ENCODE measurements at regions of chr5 and their contacts with region 1.

Region 1: DNA sequence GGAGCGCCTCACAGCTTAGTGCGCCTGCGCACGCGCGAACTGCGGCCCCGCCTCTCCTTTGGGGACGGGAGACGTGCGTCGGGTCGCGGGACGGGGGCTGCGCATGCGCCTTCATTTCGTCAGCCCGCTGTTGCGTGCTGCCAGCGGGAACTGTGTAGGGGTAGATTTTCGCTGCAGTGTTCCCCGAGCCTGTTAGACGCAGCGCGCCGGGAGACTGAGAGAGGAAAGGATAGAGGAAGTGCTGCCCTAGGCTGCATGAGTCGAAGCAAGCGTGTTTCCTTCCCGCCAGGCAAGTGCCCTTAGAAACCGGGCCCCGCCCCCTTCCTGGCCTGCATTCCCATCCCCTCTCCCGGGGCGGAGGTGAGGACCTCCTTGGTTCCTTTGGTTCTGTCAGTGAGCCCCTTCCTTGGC is 12.3 kb downstream of the ITGA1 start:
- DNase-seq: peak; percentile 91 to 97 (median 94)
- ATAC-seq: peak; percentile 92
- H3K4me3 ChIP-seq: peak overlapping the region; percentile 88
- H3K4me3 Mint-ChIP-seq: peak overlapping the region; percentile 92 to 99 (median 98)
- H3K27ac ChIP-seq: peak overlapping the region; percentile 78
- H3K27ac Mint-ChIP-seq: peak overlapping the region; percentile 89 to 98 (median 95)
- H3K4me1 ChIP-seq: peaks cover 25 to 26% of the 10 kb centered on the region in 2 donors
- H3K4me1 Mint-ChIP-seq: peaks cover 36 to 86% (median 62%) of the 10 kb centered on the region in 7 donors
- H3K27me3 ChIP-seq: no peaks in the 10 kb centered on the region
- H3K27me3 Mint-ChIP-seq: peaks cover 0 to 6% (median 0%) of the 10 kb centered on the region in 5 donors

Region 2: DNA sequence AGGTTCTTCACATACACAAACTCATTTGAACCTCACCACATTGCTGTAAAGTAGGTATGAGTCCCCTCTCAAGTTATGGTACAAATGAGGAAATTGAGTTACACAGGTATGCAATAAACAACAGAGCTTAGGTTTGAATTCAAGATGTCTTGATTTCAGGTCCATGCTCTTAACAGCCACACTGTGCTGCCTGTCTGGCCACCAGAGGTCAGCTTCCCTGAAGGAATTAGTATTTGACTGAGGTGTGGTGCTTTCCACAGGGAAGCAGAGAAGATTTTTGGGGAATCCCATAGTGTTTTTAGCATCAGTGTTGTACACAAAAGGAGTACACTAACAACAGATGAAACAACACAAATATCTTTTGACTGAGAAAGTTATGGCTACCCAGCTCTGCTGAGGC is 106.7 kb before region 1 on chr5:
- CTCF ChIA-PET with region 1: interaction called, 8 read pairs
- POLR2A ChIA-PET with region 1: no interaction called
- intact Hi-C with region 1: loop called (anchors 1 kb)
- DNase-seq: peak in 7 of 9 donors; percentile 10 to 27 (median 25)
- ATAC-seq: peak; percentile 48
- H3K4me3 ChIP-seq: no peak overlapping the region
- H3K4me3 Mint-ChIP-seq: no peak overlapping the region
- H3K27ac ChIP-seq: no peak overlapping the region
- H3K27ac Mint-ChIP-seq: peak overlapping the region in 2 of 9 donors; percentile 1 to 18
- H3K4me1 ChIP-seq: no peaks in the 10 kb centered on the region
- H3K4me1 Mint-ChIP-seq: peaks cover 0 to 17% (median 7%) of the 10 kb centered on the region in 7 donors
- H3K27me3 ChIP-seq: no peaks in the 10 kb centered on the region
- H3K27me3 Mint-ChIP-seq: peaks cover 0 to 26% (median 0%) of the 10 kb centered on the region in 5 donors

Region 3: GRCh38 chr5:52743970-52744369 is 56.0 kb before region 1 on chr5:
- CTCF ChIA-PET with region 1: no interaction called
- POLR2A ChIA-PET with region 1: no interaction called
- intact Hi-C with region 1: loop called (anchors 1 to 2 kb)
- DNase-seq: peak in 8 of 9 donors; percentile 24 to 68 (median 54)
- ATAC-seq: peak; percentile 91
- H3K4me3 ChIP-seq: no peak overlapping the region
- H3K4me3 Mint-ChIP-seq: peak overlapping the region in 9 of 10 donors; percentile 42 to 70 (median 61)
- H3K27ac ChIP-seq: peak overlapping the region; percentile 49
- H3K27ac Mint-ChIP-seq: peak overlapping the region; percentile 80 to 93 (median 90)
- H3K4me1 ChIP-seq: peaks cover 35 to 36% of the 10 kb centered on the region in 2 donors
- H3K4me1 Mint-ChIP-seq: peaks cover 35 to 69% (median 61%) of the 10 kb centered on the region in 7 donors
- H3K27me3 ChIP-seq: no peaks in the 10 kb centered on the region
- H3K27me3 Mint-ChIP-seq: peaks cover 0 to 5% (median 0%) of the 10 kb centered on the region in 5 donors

Region 4: GRCh38 chr5:52787600-52788504 is 12.1 kb before region 1 on chr5 and contains the starts of genes ITGA1 and PELO:
- CTCF ChIA-PET with region 1: interaction called, 8 read pairs
- POLR2A ChIA-PET with region 1: interaction called, 19 read pairs
- intact Hi-C with region 1: loop called (anchors 1 kb)
- DNase-seq: peak; percentile 13 to 55 (median 44)
- ATAC-seq: peak; percentile 84
- H3K4me3 ChIP-seq: peak within 1 kb of the TSS; percentile 71
- H3K4me3 Mint-ChIP-seq: peak within 1 kb of the TSS; percentile 85 to 95 (median 92)
- H3K27ac ChIP-seq: peak within 1 kb of the TSS; percentile 67
- H3K27ac Mint-ChIP-seq: peak within 1 kb of the TSS; percentile 7 to 87 (median 59)
- H3K4me1 ChIP-seq: peaks cover 0 to 15% of the 10 kb centered on the region in 2 donors
- H3K4me1 Mint-ChIP-seq: peaks cover 16 to 40% (median 33%) of the 10 kb centered on the region in 7 donors
- H3K27me3 ChIP-seq: no peaks in the 10 kb centered on the region
- H3K27me3 Mint-ChIP-seq: peaks cover 0 to 41% (median 3%) of the 10 kb centered on the region in 5 donors
- total RNA-seq, gene ITGA1: 0.92 to 8.7 (median 2.4) TPM
- total RNA-seq, gene PELO: 7.7 to 16.8 (median 9.7) TPM

Region 5: GRCh38 chr5:52925001-52925400 is 125.0 kb after region 1 on chr5:
- CTCF ChIA-PET with region 1: no interaction called
- POLR2A ChIA-PET with region 1: no interaction called
- intact Hi-C with region 1: no loop called
- DNase-seq: no peak
- ATAC-seq: no peak
- H3K4me3 ChIP-seq: no peak overlapping the region
- H3K4me3 Mint-ChIP-seq: no peak overlapping the region
- H3K27ac ChIP-seq: no peak overlapping the region
- H3K27ac Mint-ChIP-seq: no peak overlapping the region
- H3K4me1 ChIP-seq: no peaks in the 10 kb centered on the region
- H3K4me1 Mint-ChIP-seq: peaks cover 0 to 9% (median 0%) of the 10 kb centered on the region in 7 donors
- H3K27me3 ChIP-seq: no peaks in the 10 kb centered on the region
- H3K27me3 Mint-ChIP-seq: peaks cover 0 to 14% (median 0%) of the 10 kb centered on the region in 5 donors

Region 6: DNA sequence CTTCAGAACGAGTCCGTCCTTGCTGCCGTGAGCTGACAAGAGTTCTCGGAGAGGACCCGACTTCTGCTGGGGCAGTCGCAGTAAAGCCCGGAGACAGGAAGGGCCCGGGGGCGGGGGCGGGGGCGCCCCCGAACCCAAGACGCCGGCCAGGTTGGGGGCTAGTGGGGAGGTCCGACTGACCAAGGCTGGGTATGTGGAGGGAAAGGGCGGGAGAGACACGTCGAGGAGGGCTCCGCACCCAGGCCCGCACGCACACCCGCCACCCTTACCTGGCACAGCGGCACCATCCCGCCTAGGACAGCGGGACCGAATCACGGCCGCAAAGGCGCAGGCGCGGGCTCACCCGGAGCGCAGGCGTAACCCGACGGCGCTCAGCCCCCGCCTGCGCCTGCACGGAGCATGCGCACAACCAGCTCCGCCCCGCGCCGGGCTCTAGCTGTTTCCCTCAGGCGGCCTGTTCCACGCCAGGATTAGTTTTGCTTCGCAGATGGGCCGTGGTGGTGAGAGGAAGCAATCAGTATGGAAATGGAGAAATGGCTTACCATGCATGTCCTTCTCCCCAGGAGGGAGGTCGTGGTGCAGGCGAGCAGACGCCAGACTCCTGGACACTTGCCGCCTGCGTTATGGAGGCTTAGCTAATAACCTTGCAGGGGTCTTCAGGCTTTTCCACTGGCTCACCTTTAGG is 309.6 kb after region 1 on chr5 and contains the start of gene MOCS2:
- CTCF ChIA-PET with region 1: no interaction called
- POLR2A ChIA-PET with region 1: no interaction called
- intact Hi-C with region 1: loop called (anchors 2 to 5 kb)
- DNase-seq: peak; percentile 87 to 93 (median 91)
- ATAC-seq: peak; percentile 98
- H3K4me3 ChIP-seq: peak within 1 kb of the TSS; percentile 88
- H3K4me3 Mint-ChIP-seq: peak within 1 kb of the TSS; percentile 93 to 99 (median 96)
- H3K27ac ChIP-seq: peak within 1 kb of the TSS; percentile 84
- H3K27ac Mint-ChIP-seq: peak within 1 kb of the TSS; percentile 86 to 98 (median 93)
- H3K4me1 ChIP-seq: peaks cover 6 to 7% of the 10 kb centered on the region in 2 donors
- H3K4me1 Mint-ChIP-seq: peaks cover 29 to 64% (median 60%) of the 10 kb centered on the region in 7 donors
- H3K27me3 ChIP-seq: no peaks in the 10 kb centered on the region
- H3K27me3 Mint-ChIP-seq: no peaks in the 10 kb centered on the region
- total RNA-seq, gene MOCS2: 12.8 to 29.8 (median 20.9) TPM

Measured in naive thymus-derived CD4-positive, alpha-beta T cell (primary cell).